Prostate gland (tissue), 2 donors: ENCODE measurements at regions of chr18 and their contacts with region 1.

Region 1: DNA sequence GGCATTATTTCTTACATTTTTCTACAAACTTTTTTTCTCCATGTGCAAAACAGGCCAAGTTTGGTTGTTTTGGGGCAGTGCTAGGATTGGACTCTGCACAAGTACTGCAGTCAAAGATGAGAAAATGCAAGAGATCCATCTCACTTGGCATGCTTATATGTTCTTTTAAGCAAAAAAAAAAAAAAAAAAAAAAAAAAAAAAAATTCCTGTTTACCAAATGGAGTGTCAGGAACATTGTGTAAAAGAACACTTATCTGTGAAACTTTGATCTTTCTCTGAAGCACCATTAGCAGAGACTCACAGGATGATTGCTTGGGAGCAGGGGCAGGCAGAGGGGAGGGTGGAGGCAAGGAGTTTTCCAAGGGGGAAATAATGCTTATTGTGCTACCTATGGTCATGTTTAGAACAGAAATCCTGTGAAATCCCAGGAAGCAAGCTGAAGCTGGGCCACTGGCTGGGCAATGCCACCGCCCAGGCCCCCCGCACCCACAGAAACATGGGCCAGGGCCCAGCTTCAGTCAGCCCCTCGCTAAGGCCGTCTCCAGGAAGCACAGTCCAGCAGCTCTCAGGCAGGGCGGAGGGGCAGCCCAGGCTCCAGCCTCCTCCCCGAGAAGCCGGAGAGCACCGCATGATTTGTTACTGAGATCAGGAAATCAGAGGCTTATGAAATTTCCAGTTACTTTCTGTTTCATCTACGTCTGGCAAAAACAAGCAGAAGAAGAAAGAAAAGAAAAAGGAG is 229.4 kb downstream of the ZNF516 start:
- DNase-seq: peak; percentile 45
- H3K4me3 ChIP-seq: peak overlapping the region in 1 of 2 donors; percentile 2
- H3K27ac ChIP-seq: peak overlapping the region; percentile 78 to 84
- H3K4me1 ChIP-seq: no peaks in the 10 kb centered on the region
- H3K27me3 ChIP-seq: no peaks in the 10 kb centered on the region
- CTCF ChIP-seq: no peak
- POLR2A ChIP-seq: no peak

Region 2: GRCh38 chr18:75977081-75977480 is 288.6 kb before region 1 on chr18:
- intact Hi-C with region 1: no loop called
- DNase-seq: no peak
- H3K4me3 ChIP-seq: no peak overlapping the region
- H3K27ac ChIP-seq: no peak overlapping the region
- H3K4me1 ChIP-seq: no peaks in the 10 kb centered on the region
- H3K27me3 ChIP-seq: no peaks in the 10 kb centered on the region
- CTCF ChIP-seq: no peak
- POLR2A ChIP-seq: no peak

Region 3: GRCh38 chr18:76209597-76209996 is 56.1 kb before region 1 on chr18:
- intact Hi-C with region 1: no loop called
- DNase-seq: no peak
- H3K4me3 ChIP-seq: no peak overlapping the region
- H3K27ac ChIP-seq: no peak overlapping the region
- H3K4me1 ChIP-seq: no peaks in the 10 kb centered on the region
- H3K27me3 ChIP-seq: no peaks in the 10 kb centered on the region
- CTCF ChIP-seq: no peak
- POLR2A ChIP-seq: no peak

Region 4: GRCh38 chr18:76306685-76307292 is 41.1 kb after region 1 on chr18:
- intact Hi-C with region 1: no loop called
- DNase-seq: no peak
- H3K4me3 ChIP-seq: no peak overlapping the region
- H3K27ac ChIP-seq: no peak overlapping the region
- H3K4me1 ChIP-seq: no peaks in the 10 kb centered on the region
- H3K27me3 ChIP-seq: no peaks in the 10 kb centered on the region
- CTCF ChIP-seq: no peak
- POLR2A ChIP-seq: no peak

Region 5: DNA sequence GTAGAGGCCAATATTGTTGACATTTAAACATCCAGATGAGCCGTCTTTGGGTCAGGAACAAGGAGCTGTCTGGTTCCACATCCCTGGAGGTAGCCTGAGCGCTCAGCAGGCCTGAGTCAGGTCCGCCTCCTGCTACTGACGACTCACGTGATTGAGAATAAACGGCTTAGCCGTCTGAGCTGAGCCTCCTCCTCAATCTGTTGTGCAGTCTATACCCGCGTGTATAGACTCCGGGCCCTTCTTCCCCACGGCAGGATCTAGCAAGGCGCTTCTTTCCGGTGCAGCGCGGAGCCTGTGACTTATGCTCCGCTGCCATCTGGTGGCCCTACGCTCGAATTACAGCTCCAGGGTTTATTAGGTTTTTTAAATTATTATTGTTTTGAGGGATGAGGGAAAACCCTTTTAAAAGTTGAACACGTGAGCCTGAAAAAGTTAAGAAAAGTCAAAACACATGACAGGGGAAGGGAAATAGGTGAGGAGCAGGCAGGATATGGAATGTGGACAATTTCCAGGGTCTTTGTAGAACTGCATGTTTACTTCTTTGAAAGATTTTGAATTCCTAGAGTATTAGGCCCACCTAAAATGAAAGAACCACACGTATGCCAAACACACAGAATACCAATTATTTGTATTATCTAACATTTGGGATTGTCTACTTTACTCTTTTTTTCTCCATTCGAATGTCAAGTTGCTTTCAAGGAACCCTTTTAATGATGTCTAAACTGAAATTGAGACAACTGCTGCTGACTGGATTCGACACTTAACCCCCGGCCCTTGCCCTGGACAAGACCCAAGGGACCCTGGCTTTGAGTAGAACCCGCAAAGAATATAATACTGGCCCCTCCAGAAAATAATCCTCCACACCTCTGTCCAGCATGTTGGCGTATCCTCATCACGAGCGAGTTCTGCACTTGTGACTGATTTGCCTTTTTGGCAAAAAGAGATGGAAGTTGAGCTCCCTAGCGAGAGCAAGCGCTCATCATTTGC is 444.3 kb after region 1 on chr18:
- intact Hi-C with region 1: loop called (anchors 10 kb)
- DNase-seq: peak; percentile 51
- H3K4me3 ChIP-seq: no peak overlapping the region
- H3K27ac ChIP-seq: no peak overlapping the region
- H3K4me1 ChIP-seq: no peaks in the 10 kb centered on the region
- H3K27me3 ChIP-seq: no peaks in the 10 kb centered on the region
- CTCF ChIP-seq: peak; percentile 75 to 92 (median 82)
- POLR2A ChIP-seq: no peak